ENCODE measurements at regions of chr19 and their contacts with region 1.

Region 1: DNA sequence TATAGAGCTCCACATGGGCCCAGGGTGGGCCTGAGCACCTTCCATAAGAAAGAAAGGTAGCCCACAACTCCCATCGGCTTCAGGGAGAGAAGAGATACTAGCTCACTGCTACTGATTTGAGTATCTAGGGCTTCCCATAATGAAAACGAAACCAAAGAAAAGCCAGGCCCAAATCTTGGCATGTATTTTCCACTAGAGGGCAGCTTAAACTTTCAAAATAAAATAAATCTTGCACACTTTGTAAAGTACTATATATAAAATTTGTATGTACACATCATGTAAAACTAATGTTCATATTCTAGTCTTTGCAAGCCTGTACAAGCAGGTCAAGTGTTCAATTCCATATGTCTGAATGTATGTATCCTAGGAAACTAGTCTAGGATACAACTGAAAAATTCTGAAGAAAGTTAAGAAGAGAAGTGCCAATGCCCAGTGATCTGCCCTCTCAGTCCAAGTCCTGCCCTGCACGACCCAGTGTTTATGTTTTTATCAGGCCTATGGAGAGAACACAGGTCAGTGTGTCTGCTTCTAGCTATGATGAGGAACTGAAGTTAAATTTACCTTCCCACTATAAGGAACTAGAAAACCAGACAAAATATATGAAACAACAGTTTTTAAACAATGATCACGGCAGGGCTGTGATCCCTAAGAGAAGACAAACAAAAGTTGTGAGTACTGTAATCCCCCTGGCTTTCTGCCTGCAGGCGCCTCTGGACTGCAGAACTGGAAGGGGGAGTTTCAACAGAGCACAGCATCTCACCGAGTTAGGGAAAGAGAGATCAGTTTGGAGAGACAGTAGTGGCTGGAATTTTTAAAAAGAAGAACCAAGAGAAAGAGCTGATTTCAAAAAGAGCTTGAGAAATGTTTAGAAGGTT is 475.7 kb downstream of the UQCRFS1 start:
- DNase-seq: no peak
- ATAC-seq: peak; percentile 66
- H3K4me3 ChIP-seq: no peak overlapping the region
- H3K27ac ChIP-seq: no peak overlapping the region
- H3K4me1 ChIP-seq: no peaks in the 10 kb centered on the region
- H3K27me3 ChIP-seq: no peaks in the 10 kb centered on the region

Region 2: GRCh38 chr19:28686756-28687155 is 50.5 kb before region 1 on chr19:
- intact Hi-C with region 1: no loop called
- DNase-seq: no peak
- ATAC-seq: no peak
- H3K4me3 ChIP-seq: no peak overlapping the region
- H3K27ac ChIP-seq: no peak overlapping the region
- H3K4me1 ChIP-seq: no peaks in the 10 kb centered on the region
- H3K27me3 ChIP-seq: no peaks in the 10 kb centered on the region

Region 3: DNA sequence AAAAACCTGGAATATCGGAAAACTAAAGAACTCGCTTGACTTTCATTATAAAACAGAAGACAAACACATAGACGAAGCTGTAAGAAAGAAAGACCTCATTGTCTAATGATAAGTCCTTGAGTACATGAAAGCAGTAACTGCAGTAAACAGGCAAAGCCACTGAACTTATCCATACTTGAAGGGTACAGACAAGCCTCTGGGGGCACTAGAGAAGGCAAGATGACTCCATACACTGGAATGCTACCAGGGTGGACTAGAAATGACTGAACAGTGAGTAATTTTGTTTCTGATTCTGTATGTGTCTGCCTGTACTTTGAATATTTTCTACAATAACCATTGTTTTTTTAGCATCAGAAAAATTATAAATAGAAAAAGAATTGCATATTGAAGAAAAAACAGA is 32.2 kb before region 1 on chr19:
- intact Hi-C with region 1: no loop called
- DNase-seq: no peak
- ATAC-seq: no peak
- H3K4me3 ChIP-seq: no peak overlapping the region
- H3K27ac ChIP-seq: no peak overlapping the region
- H3K4me1 ChIP-seq: no peaks in the 10 kb centered on the region
- H3K27me3 ChIP-seq: no peaks in the 10 kb centered on the region

Region 4: DNA sequence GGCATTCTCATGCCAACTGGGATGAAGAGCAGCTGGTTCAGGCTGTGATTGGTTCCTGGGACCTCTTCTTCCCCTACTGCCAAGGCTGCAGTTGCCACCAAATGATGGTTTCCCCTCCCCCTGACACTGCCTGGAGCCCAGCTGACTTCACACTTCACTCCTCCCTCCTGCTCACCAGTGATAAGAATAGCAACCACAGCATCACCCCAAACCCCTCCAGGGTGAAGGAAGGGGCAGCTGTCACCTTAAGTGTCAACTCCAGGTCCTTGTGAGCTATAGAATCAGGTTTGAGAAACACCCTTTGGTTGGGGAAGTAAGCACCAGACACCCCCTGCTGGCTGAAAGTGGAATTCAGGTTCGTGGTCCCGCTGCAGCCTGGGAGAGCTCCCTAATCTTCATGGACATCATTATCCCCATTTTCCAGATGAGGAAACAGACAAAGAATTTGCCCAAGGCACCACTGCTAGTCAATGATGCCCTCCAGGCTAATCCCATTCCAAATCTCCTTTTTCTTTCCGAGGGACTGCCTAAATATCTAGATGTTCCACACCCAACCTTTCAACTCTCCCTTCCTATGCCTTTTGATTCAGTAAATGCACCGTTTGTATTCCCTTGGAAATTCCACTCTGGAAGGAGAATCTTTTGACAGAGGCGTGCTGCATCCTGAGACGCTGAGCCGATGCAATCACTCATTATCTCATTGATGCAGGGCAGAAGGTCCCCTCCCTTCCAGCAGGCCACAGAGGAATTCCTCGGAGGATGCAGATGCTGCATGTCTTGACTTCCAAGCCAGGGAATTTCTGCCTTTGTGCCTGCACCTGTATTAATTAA is 526.3 kb after region 1 on chr19:
- intact Hi-C with region 1: loop called in 1 of 2 experiments (anchors 10 kb)
- DNase-seq: no peak
- ATAC-seq: no peak
- H3K4me3 ChIP-seq: no peak overlapping the region
- H3K27ac ChIP-seq: no peak overlapping the region
- H3K4me1 ChIP-seq: no peaks in the 10 kb centered on the region
- H3K27me3 ChIP-seq: no peaks in the 10 kb centered on the region